Endothelial cell of umbilical vein (primary cell): ENCODE measurements at regions of chr2 and their contacts with region 1.

Region 1: DNA sequence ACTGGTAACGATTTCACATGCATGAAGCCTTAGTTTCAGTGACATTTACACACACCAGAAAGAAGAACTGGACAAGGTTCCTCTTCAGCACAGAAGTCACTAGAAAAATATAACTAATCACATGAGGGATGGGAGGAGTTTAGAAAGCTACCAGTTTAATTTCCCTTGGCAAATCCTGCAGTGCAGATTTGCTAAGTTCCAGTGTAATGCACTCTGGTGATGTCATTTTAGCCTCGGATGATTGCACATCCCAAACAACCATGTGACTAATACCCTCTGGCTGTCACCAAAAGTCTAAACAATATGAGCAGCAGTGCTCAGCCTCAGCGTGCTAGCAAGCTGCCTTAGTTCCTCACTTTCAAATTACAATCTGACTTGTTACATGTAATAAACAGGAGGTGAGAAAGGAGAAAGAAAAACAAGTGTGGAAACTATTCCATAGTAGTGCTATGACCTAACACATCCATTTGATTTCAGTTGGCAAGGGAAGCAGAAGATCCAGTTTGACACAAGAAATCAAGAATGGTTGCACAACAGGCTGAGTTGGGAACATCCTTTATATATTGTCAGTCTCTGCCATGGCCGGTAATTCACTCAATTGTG is 35.3 kb upstream of the PPP1CB start:
- DNase-seq: peak; percentile 88
- H3K4me3 ChIP-seq: no peak overlapping the region
- H3K27ac ChIP-seq: peak overlapping the region; percentile 71
- H3K4me1 ChIP-seq: peaks cover 14% of the 10 kb centered on the region
- H3K27me3 ChIP-seq: no peaks in the 10 kb centered on the region
- CTCF ChIP-seq: no peak
- POLR2A ChIP-seq: no peak

Region 2: GRCh38 chr2:28730641-28731146 is 14.3 kb after region 1 on chr2:
- CTCF ChIA-PET with region 1: interaction called, 3 read pairs
- POLR2A ChIA-PET with region 1: interaction called, 12 read pairs
- dilution Hi-C with region 1: no loop called
- intact Hi-C with region 1: no loop called
- DNase-seq: no peak
- H3K4me3 ChIP-seq: no peak overlapping the region
- H3K27ac ChIP-seq: no peak overlapping the region
- H3K4me1 ChIP-seq: no peaks in the 10 kb centered on the region
- H3K27me3 ChIP-seq: no peaks in the 10 kb centered on the region
- CTCF ChIP-seq: no peak
- POLR2A ChIP-seq: no peak

Region 3: DNA sequence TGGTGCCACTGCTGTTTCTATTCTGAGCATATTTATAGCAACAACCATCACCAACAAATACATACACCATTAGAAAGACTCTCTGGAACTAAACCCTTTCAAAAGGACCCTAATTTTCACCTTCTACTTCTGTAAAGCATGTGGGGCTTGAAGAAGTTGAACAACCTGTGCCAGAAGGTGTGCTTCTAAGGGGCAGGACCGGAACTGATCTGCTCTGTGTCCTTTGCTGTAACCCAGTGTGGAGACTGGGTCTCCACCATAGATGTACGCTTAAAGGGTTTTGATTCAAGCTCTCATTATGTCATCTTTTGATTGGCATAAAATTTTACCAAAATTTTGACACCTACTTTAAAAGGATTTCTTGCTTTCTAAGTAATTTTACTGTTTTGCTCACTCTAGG is 218.4 kb after region 1 on chr2:
- CTCF ChIA-PET with region 1: no interaction called
- POLR2A ChIA-PET with region 1: no interaction called
- dilution Hi-C with region 1: no loop called
- intact Hi-C with region 1: no loop called
- DNase-seq: no peak
- H3K4me3 ChIP-seq: no peak overlapping the region
- H3K27ac ChIP-seq: no peak overlapping the region
- H3K4me1 ChIP-seq: no peaks in the 10 kb centered on the region
- H3K27me3 ChIP-seq: no peaks in the 10 kb centered on the region
- CTCF ChIP-seq: no peak
- POLR2A ChIP-seq: no peak